CD4-positive, alpha-beta memory T cell (primary cell): ENCODE measurements at regions of chr1 and their contacts with region 1.

Region 1: GRCh38 chr1:37514350-37515184 is at the start of gene MEAF6:
- DNase-seq: peak; percentile 81 to 88 (median 85)
- H3K4me3 ChIP-seq: peak within 1 kb of the TSS; percentile 74
- H3K4me3 Mint-ChIP-seq: peak within 1 kb of the TSS; percentile 97 to 99 (median 98)
- H3K27ac ChIP-seq: peak within 1 kb of the TSS; percentile 82
- H3K27ac Mint-ChIP-seq: peak within 1 kb of the TSS; percentile 96 to 99 (median 99)
- H3K4me1 ChIP-seq: peaks cover 34% of the 10 kb centered on the region
- H3K4me1 Mint-ChIP-seq: peaks cover 27 to 49% (median 38%) of the 10 kb centered on the region in 4 donors
- H3K27me3 ChIP-seq: no peaks in the 10 kb centered on the region
- H3K27me3 Mint-ChIP-seq: no peaks in the 10 kb centered on the region
- total RNA-seq, gene MEAF6: 97.9 to 98.2 TPM

Region 2: GRCh38 chr1:37474046-37474759 is 40.4 kb before region 1 on chr1 and contains the start of gene ZC3H12A:
- CTCF ChIA-PET with region 1: interaction called, 13 read pairs
- POLR2A ChIA-PET with region 1: interaction called, 131 read pairs
- intact Hi-C with region 1: loop called (anchors 1 kb)
- DNase-seq: peak; percentile 89 to 94 (median 93)
- H3K4me3 ChIP-seq: peak within 1 kb of the TSS; percentile 85 to 96
- H3K4me3 Mint-ChIP-seq: peak within 1 kb of the TSS; percentile 95 to 99 (median 97)
- H3K27ac ChIP-seq: peak within 1 kb of the TSS; percentile 96
- H3K27ac Mint-ChIP-seq: peak within 1 kb of the TSS; percentile 97 to 100 (median 99)
- H3K4me1 ChIP-seq: peaks cover 37% of the 10 kb centered on the region
- H3K4me1 Mint-ChIP-seq: peaks cover 33 to 65% (median 43%) of the 10 kb centered on the region in 4 donors
- H3K27me3 ChIP-seq: no peaks in the 10 kb centered on the region
- H3K27me3 Mint-ChIP-seq: peaks cover 0 to 2% of the 10 kb centered on the region in 2 donors
- total RNA-seq, gene ZC3H12A: 54.6 to 60.7 TPM

Region 3: GRCh38 chr1:37486680-37487618 is 27.6 kb before region 1 on chr1:
- CTCF ChIA-PET with region 1: interaction called, 20 read pairs
- POLR2A ChIA-PET with region 1: interaction called, 32 read pairs
- intact Hi-C with region 1: no loop called
- DNase-seq: peak; percentile 69 to 80 (median 71)
- H3K4me3 ChIP-seq: no peak overlapping the region
- H3K4me3 Mint-ChIP-seq: no peak overlapping the region
- H3K27ac ChIP-seq: peak overlapping the region; percentile 42
- H3K27ac Mint-ChIP-seq: peak overlapping the region; percentile 78 to 100 (median 91)
- H3K4me1 ChIP-seq: peaks cover 17% of the 10 kb centered on the region
- H3K4me1 Mint-ChIP-seq: peaks cover 8 to 21% (median 14%) of the 10 kb centered on the region in 4 donors
- H3K27me3 ChIP-seq: no peaks in the 10 kb centered on the region
- H3K27me3 Mint-ChIP-seq: no peaks in the 10 kb centered on the region

Region 4: DNA sequence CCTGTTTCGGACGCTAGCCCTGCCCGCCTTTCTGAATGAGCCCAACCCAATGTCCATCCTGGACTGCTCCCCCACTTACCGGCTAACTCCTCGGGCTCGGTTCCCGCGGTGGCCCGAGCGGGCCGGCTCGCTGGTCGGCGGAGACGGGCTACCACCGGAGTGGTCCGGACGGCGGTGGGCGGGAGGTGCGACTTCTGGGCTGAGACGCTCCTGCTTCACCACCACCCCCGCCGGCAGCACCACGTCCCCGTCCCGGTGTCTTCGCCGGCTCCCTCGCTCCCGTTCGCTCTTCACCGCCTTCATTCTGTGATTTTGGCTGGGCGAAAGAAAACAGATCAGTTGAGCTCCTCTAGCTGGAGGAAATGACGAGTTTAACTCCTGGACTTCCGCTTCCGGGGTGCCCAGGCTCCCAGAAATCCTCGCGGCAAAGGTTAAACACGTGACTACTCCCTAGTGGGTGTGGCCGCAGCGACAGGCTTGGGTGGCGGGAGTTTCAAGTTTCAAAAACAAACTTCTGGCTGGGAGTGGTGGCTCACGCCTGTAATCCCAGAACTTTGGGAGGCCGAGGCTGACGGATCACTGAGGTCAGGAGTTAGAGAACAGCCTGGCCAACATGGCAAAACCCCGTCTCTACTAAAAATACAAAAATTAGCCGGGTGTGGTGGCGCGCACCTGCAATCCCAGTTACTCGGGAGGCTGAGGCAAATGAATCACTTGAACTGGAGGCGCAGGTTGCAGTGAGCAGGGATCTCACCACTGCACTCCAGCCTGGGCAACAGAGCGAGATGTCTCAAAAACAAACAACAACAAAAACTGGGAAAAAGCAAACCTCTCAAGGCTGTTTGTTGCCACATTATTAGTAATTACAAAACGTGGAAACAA is 39.6 kb after region 1 on chr1 and contains the start of gene SNIP1:
- CTCF ChIA-PET with region 1: interaction called, 14 read pairs
- POLR2A ChIA-PET with region 1: interaction called, 15 read pairs
- intact Hi-C with region 1: loop called (anchors 1 kb)
- DNase-seq: peak; percentile 90 to 96 (median 92)
- H3K4me3 ChIP-seq: peak within 1 kb of the TSS; percentile 96 to 99
- H3K4me3 Mint-ChIP-seq: peak within 1 kb of the TSS; percentile 95 to 100 (median 98)
- H3K27ac ChIP-seq: peak within 1 kb of the TSS; percentile 96
- H3K27ac Mint-ChIP-seq: peak within 1 kb of the TSS; percentile 81 to 100 (median 98)
- H3K4me1 ChIP-seq: peaks cover 30% of the 10 kb centered on the region
- H3K4me1 Mint-ChIP-seq: peaks cover 26 to 49% (median 36%) of the 10 kb centered on the region in 4 donors
- H3K27me3 ChIP-seq: no peaks in the 10 kb centered on the region
- H3K27me3 Mint-ChIP-seq: no peaks in the 10 kb centered on the region
- total RNA-seq, gene SNIP1: 29.8 to 30.2 TPM

Region 5: DNA sequence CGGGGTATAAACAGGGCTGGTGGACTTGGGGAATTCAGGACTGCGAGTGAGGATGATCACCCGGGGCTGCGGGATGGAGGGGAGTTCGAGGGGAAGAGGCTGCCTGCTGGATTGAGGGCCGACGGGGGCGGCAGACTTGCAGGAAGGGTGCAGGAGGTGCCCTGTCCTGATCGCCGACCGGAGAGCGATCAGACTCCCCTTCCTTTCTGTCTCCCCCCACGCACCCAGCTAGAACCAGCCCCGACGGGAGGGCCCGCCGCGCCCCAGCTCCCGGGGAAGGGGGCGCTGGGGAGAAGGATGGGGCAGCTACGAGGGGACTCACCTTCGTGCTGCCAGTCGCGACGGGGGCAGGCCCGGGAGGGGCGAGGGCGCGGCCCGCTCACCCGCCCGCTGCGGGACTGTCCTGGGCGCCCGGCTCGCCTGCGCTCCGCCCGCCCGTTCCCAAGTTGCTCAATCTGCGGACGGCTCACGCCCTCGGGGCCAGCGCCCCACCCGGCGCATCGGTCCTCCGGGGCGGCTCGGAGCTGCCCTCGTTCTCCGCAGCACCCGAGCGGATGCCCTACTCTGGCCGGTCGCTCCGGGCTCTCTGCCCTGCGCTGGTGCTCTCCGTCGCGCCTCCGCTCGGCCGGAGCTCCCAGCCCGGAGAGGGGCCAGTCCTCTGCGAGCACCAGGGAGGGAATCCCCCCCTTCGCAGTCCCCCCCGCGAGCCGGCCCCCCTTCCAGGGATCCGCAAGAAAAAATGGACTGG is 119.9 kb after region 1 on chr1 and contains the start of gene RSPO1:
- CTCF ChIA-PET with region 1: no interaction called
- POLR2A ChIA-PET with region 1: no interaction called
- intact Hi-C with region 1: no loop called
- DNase-seq: no peak
- H3K4me3 ChIP-seq: no peak within 1 kb of the TSS
- H3K4me3 Mint-ChIP-seq: peak within 1 kb of the TSS in 7 of 8 donors; percentile 36 to 78 (median 69)
- H3K27ac ChIP-seq: no peak within 1 kb of the TSS
- H3K27ac Mint-ChIP-seq: no peak within 1 kb of the TSS
- H3K4me1 ChIP-seq: no peaks in the 10 kb centered on the region
- H3K4me1 Mint-ChIP-seq: peaks cover 7 to 22% (median 12%) of the 10 kb centered on the region in 4 donors
- H3K27me3 ChIP-seq: peaks cover 57% of the 10 kb centered on the region
- H3K27me3 Mint-ChIP-seq: peaks cover 53 to 65% of the 10 kb centered on the region in 2 donors
- total RNA-seq, gene RSPO1: not detected